ENCODE measurements at regions of chr4 and their contacts with region 1.

Region 1: DNA sequence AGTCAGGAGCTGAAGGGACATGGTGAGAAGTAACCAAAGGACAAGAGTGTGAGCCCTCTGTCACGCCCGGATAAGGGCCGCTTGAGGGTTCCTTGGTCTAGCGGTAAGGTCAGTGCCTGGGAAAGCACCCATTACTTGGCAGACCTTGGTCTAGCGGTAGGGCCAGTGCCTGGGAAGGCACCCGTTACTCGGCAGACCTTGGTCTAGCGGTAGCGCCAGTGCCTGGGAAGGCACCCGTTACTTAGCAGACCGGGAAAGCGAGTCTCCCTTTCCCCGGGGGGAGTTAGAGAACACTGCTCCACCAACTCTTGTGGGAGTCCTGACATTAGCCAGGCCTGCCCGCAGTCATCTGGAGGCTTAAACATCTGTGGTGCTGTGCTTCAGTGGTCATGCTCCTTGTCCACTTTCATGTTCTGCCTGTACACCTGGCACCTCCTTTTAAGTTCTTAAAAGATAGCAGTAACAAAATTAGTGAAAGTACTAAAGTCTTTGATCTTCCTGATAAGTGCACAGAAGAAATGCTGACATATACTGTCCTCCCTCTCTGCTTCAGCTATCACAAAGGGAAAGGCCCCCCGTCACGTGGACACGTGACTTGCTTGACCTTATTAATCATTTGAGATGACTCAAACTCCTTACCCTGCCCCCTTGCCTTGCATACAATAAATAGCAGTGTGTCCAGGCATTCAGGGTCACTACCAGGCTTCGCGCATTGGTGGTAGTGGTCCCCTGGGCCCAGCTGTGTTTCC is 9.3 kb upstream of the SEC24B start:
- DNase-seq: no peak
- H3K4me3 ChIP-seq: no peak overlapping the region
- H3K4me3 Mint-ChIP-seq: no peak overlapping the region
- H3K27ac ChIP-seq: no peak overlapping the region
- H3K27ac Mint-ChIP-seq: no peak overlapping the region
- H3K4me1 ChIP-seq: peaks cover 3% of the 10 kb centered on the region
- H3K4me1 Mint-ChIP-seq: peaks cover 0 to 4% (median 3%) of the 10 kb centered on the region in 4 donors
- H3K27me3 ChIP-seq: no peaks in the 10 kb centered on the region
- H3K27me3 Mint-ChIP-seq: peaks cover 0 to 3% of the 10 kb centered on the region in 2 donors

Region 2: DNA sequence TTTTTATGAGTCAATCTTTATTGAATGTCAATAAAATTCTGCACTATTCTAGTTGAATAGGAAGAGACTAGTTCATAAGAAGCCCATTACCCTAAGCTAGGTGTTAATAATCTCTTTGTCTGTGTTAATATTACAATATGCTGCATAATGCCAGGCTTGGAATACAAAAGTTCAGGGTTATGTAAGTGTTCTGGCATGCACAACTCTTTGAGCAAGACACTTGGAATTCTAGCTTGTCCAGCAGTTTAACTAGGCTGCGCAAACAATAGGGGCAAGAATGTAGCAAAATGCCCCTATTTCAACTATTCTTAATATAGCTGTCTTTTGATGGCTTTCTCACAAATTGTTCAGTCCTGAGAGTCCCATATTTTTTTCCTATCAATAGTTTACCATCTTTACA is 630.1 kb before region 1 on chr4:
- CTCF ChIA-PET with region 1: no interaction called
- POLR2A ChIA-PET with region 1: no interaction called
- intact Hi-C with region 1: no loop called
- DNase-seq: no peak
- H3K4me3 ChIP-seq: no peak overlapping the region
- H3K4me3 Mint-ChIP-seq: no peak overlapping the region
- H3K27ac ChIP-seq: no peak overlapping the region
- H3K27ac Mint-ChIP-seq: no peak overlapping the region
- H3K4me1 ChIP-seq: no peaks in the 10 kb centered on the region
- H3K4me1 Mint-ChIP-seq: no peaks in the 10 kb centered on the region
- H3K27me3 ChIP-seq: no peaks in the 10 kb centered on the region
- H3K27me3 Mint-ChIP-seq: peaks cover 0 to 5% of the 10 kb centered on the region in 2 donors

Region 3: GRCh38 chr4:109803924-109804571 is 379.8 kb after region 1 on chr4:
- CTCF ChIA-PET with region 1: interaction called, 6 read pairs
- POLR2A ChIA-PET with region 1: no interaction called
- intact Hi-C with region 1: loop called (anchors 1 kb)
- DNase-seq: peak in 3 of 5 donors; percentile 16 to 29 (median 26)
- H3K4me3 ChIP-seq: no peak overlapping the region
- H3K4me3 Mint-ChIP-seq: no peak overlapping the region
- H3K27ac ChIP-seq: no peak overlapping the region
- H3K27ac Mint-ChIP-seq: no peak overlapping the region
- H3K4me1 ChIP-seq: no peaks in the 10 kb centered on the region
- H3K4me1 Mint-ChIP-seq: no peaks in the 10 kb centered on the region
- H3K27me3 ChIP-seq: no peaks in the 10 kb centered on the region
- H3K27me3 Mint-ChIP-seq: peaks cover 0 to 1% of the 10 kb centered on the region in 2 donors

Region 4: DNA sequence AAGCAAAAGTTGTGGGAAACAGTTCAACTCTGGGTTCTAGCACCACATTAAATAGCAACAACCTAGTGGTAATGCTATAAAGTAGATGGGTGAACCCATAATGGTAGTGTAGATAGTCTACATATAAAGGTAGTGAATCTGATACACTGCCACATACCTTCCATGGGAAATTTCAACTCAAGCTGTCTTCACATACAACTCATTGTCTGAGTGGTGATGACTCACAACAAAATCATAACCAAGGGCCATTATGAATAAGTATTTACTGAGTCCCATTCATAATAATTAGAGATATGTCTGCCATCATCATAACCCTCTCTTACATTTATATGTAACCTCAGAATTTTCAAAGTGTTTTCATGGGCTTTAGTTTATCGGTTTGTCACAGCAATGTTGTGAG is 523.2 kb after region 1 on chr4:
- CTCF ChIA-PET with region 1: no interaction called
- POLR2A ChIA-PET with region 1: no interaction called
- intact Hi-C with region 1: no loop called
- DNase-seq: no peak
- H3K4me3 ChIP-seq: no peak overlapping the region
- H3K4me3 Mint-ChIP-seq: no peak overlapping the region
- H3K27ac ChIP-seq: no peak overlapping the region
- H3K27ac Mint-ChIP-seq: no peak overlapping the region
- H3K4me1 ChIP-seq: no peaks in the 10 kb centered on the region
- H3K4me1 Mint-ChIP-seq: no peaks in the 10 kb centered on the region
- H3K27me3 ChIP-seq: no peaks in the 10 kb centered on the region
- H3K27me3 Mint-ChIP-seq: peaks cover 0 to 2% of the 10 kb centered on the region in 2 donors

Region 5: DNA sequence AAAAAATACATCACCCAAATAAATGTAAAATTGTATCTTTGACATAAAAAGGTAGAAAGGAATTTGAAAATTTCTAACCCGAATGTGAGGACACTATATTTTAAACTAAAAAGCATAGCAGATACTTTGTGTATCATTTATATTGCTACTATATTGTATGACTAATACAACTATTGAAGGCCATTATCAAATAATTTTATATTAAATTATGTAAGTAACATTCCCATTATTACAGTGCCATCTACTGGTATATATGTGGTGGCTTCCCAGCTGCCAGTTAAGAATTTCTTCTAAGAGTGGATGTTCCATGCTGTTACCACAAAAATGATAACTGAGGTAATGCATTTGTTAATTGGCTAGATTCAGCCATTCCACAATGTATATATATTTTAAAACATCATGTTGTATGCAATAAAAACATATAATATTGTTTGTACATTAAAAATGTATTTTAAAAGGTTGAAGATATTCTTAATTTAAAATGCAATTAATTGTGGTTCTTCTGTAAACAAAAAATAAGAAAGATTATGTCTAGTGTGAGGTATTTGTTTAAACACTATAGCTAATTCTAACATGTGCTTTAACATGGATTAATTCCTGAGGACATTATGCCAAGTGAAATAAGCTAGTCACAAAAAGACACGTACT is 553.7 kb after region 1 on chr4:
- CTCF ChIA-PET with region 1: interaction called, 9 read pairs
- POLR2A ChIA-PET with region 1: no interaction called
- intact Hi-C with region 1: loop called (anchors 1 kb)
- DNase-seq: peak in 4 of 5 donors; percentile 18 to 26 (median 22)
- H3K4me3 ChIP-seq: no peak overlapping the region
- H3K4me3 Mint-ChIP-seq: no peak overlapping the region
- H3K27ac ChIP-seq: no peak overlapping the region
- H3K27ac Mint-ChIP-seq: no peak overlapping the region
- H3K4me1 ChIP-seq: no peaks in the 10 kb centered on the region
- H3K4me1 Mint-ChIP-seq: no peaks in the 10 kb centered on the region
- H3K27me3 ChIP-seq: no peaks in the 10 kb centered on the region
- H3K27me3 Mint-ChIP-seq: peaks cover 14 to 24% of the 10 kb centered on the region in 2 donors

Measured in CD4-positive, alpha-beta memory T cell (primary cell).